ENCODE measurements at regions of chr12 and their contacts with region 1.

Region 1: DNA sequence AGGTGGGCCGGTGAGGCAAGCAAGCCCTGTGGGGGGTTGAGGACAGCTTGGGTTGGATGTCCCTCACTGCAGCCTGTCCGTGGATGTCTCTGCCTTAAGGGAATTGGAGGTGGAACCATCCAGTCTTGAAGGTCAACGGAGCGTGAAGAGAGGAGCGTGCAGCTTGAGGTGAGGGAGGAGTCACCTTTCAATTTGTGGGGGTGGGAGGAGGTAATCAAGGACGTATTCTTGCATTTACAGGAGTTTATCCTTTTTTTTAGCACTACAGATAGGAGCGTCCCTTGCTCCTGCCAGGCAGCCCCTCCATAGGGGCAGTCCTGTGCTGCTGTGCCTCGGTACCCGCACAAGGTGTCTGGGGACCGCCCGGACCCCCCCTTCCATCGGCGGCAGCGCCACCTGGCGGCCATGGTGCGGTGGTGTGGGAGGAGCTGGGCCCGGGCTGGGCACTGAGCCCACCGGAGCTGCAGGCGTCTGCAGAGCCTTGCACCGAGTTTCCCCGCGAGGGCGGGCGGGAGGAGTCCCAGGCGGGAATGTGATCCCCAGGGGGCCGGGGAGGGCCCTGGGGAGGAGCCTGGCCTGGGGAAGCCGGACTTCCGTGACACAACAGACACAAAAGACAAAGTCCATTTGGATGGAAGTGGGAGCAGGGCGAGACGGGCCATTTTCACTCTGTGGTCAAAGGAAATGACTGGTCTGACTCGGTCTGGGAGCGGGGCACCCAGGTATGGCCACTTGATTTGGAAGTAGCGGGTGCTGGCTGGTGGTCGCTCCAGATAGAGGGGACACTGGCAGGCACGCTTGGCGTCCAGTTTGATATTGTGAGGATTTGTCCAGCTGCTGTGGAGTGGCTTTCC is 923 bp downstream of the DNAJC22 start:
- DNase-seq: peak; percentile 95 to 98
- ATAC-seq: peak; percentile 84 to 90
- H3K4me3 ChIP-seq: peak overlapping the region; percentile 50
- H3K27ac ChIP-seq: peak overlapping the region; percentile 80 to 86
- H3K4me1 ChIP-seq: peaks cover 48% of the 10 kb centered on the region
- CTCF ChIP-seq: peak; percentile 98
- EP300 ChIP-seq: no peak
- POLR2A ChIP-seq: peak; percentile 84
- RAD21 ChIP-seq: peak; percentile 32 to 55; a peak in 4 of 5 replicates

Region 2: DNA sequence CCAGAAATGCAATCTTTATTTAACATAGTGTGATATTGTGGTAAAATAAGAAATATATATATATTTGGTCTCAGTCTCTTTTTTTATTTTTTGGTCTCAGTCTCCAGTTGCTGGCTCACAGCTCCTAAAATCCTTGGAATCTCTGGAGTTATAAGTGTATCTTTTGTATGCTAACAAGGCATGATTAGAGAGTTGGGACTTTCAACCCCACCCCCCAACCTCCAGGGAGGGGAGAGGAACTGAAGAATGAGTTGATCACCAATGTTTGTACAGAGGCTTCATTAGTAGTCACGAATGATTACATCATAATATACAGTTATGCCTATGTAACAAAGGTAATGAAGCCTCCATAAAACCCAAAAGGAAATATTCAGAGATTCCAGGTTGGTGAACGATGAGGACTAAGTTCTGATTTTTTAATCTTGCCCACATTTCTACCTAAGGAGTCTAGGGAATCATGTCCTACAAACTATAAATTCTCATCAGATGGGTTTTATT is 755.0 kb before region 1 on chr12:
- CTCF ChIA-PET with region 1: no interaction called
- POLR2A ChIA-PET with region 1: no interaction called
- DNase-seq: no peak
- ATAC-seq: no peak
- H3K4me3 ChIP-seq: no peak overlapping the region
- H3K27ac ChIP-seq: no peak overlapping the region
- H3K4me1 ChIP-seq: no peaks in the 10 kb centered on the region
- CTCF ChIP-seq: no peak
- EP300 ChIP-seq: no peak
- POLR2A ChIP-seq: no peak
- RAD21 ChIP-seq: no peak

Region 3: GRCh38 chr12:48758221-48758620 is 589.4 kb before region 1 on chr12:
- CTCF ChIA-PET with region 1: no interaction called
- POLR2A ChIA-PET with region 1: no interaction called
- DNase-seq: peak in 1 of 2 experiments; percentile 29
- ATAC-seq: peak; percentile 57 to 64; a peak in 4 of 6 replicates
- H3K4me3 ChIP-seq: no peak overlapping the region
- H3K27ac ChIP-seq: no peak overlapping the region
- H3K4me1 ChIP-seq: no peaks in the 10 kb centered on the region
- CTCF ChIP-seq: no peak
- EP300 ChIP-seq: no peak
- POLR2A ChIP-seq: no peak
- RAD21 ChIP-seq: no peak

Region 4: GRCh38 chr12:49322708-49323523 is 24.7 kb before region 1 on chr12 and contains the start of gene TROAP:
- CTCF ChIA-PET with region 1: interaction called, 104 read pairs
- POLR2A ChIA-PET with region 1: interaction called, 17 read pairs
- DNase-seq: peak; percentile 98 to 99
- ATAC-seq: peak; percentile 99 to 100
- H3K4me3 ChIP-seq: peak within 1 kb of the TSS; percentile 62
- H3K27ac ChIP-seq: peak within 1 kb of the TSS; percentile 80 to 91
- H3K4me1 ChIP-seq: peaks cover 12% of the 10 kb centered on the region; the same call in 2 of the 3 replicates
- CTCF ChIP-seq: no peak
- EP300 ChIP-seq: no peak
- POLR2A ChIP-seq: peak; percentile 94
- RAD21 ChIP-seq: no peak
- polyA plus RNA-seq, gene TROAP: 50.0 and 56.4 TPM in 2 replicates

Region 5: DNA sequence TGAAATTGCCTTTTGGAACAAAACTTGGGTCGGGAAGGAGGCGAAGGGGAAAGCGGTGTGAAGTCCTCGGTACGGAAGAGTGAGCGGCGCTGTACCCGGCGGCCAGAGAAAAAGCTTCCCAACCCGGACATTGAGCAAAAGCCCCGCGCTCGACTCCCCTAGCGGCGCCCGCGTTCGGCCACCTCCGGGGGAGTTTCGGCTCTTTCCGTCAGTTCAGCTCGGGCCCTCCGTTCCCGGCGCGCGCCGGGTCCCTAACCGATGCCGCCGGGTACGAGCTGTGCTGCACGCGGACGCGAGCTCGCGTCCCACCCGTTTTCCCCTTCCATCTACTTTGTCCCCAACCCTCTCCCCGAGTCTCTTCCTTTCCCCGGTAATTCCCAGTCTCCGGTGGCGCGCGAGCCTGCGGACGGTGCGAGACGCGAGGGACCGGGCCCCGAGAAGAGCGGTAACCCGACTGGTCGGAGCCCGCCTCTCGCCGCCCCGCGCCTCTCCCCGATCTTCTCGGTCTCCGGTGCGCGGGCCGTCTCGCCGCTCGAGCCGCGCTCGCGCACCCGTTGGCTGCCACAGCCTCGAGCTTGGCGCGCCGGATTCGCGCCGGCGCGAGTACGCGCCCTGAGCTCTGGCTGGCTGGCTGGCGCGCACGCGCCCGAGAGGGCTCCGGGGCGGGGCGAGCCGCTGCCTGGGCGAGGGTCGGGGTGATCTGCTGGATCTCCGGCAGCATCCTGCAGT is 19.2 kb after region 1 on chr12:
- CTCF ChIA-PET with region 1: interaction called, 194 read pairs
- POLR2A ChIA-PET with region 1: interaction called, 11 read pairs
- DNase-seq: peak; percentile 95 to 97
- ATAC-seq: peak; percentile 87 to 90
- H3K4me3 ChIP-seq: peak overlapping the region; percentile 86
- H3K27ac ChIP-seq: peak overlapping the region; percentile 95 to 96
- H3K4me1 ChIP-seq: peaks cover 36% of the 10 kb centered on the region
- CTCF ChIP-seq: no peak
- EP300 ChIP-seq: no peak
- POLR2A ChIP-seq: peak; percentile 65
- RAD21 ChIP-seq: no peak

Region 6: GRCh38 chr12:49503674-49504180 is 156.1 kb after region 1 on chr12:
- CTCF ChIA-PET with region 1: interaction called, 201 read pairs
- POLR2A ChIA-PET with region 1: no interaction called
- DNase-seq: peak; percentile 44 to 88
- ATAC-seq: peak in 1 of 2 experiments; percentile 66; a peak in 3 of 6 replicates
- H3K4me3 ChIP-seq: peak overlapping the region; percentile 25; the same call in 2 of the 3 replicates
- H3K27ac ChIP-seq: peak overlapping the region; percentile 78 to 84
- H3K4me1 ChIP-seq: peaks cover 60% of the 10 kb centered on the region
- CTCF ChIP-seq: no peak
- EP300 ChIP-seq: peak in 1 of 2 experiments; percentile 68; a peak in 1 of 5 replicates
- POLR2A ChIP-seq: no peak
- RAD21 ChIP-seq: no peak

Region 7: DNA sequence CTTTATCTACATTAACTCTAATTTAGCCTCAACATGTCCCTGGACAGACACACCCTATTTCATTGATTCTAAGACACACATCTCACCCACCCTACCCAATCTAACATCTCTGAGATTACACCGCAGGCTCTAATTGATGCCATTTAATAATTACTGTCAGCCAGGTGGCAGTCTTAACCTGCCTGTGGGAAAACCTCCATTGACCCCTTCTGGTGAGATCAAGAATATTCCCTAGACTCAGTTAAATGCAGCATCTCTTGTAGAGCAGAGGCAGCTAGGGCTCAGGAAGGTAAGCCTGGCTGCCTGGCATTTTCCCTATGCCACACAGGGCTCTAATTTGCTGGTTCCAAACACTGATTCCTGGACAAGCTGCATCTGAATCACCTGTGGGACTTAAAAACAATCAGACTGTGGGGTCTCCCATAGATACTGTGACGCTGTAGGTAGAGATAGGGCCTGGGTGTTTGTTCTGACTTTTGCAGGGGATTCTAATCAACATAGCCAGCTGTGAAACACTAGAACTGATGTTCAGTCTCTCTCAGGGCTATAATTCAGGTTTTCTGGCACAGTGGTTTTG is 206.0 kb after region 1 on chr12:
- CTCF ChIA-PET with region 1: interaction called, 30 read pairs
- POLR2A ChIA-PET with region 1: interaction called, 3 read pairs
- DNase-seq: peak; percentile 68 to 71
- ATAC-seq: peak; percentile 58 to 75
- H3K4me3 ChIP-seq: no peak overlapping the region
- H3K27ac ChIP-seq: no peak overlapping the region
- H3K4me1 ChIP-seq: no peaks in the 10 kb centered on the region
- CTCF ChIP-seq: peak; percentile 72
- EP300 ChIP-seq: no peak
- POLR2A ChIP-seq: no peak
- RAD21 ChIP-seq: peak; percentile 72 to 87

Measured in A549 (cell line).